Right cardiac atrium (tissue), 5 donors: ENCODE measurements at regions of chr2 and their contacts with region 1.

Region 1: GRCh38 chr2:118003396-118003824 is 10.5 kb downstream of the CCDC93 start:
- DNase-seq: no peak
- ATAC-seq: peak; percentile 90 to 93
- H3K4me3 ChIP-seq: no peak overlapping the region
- H3K27ac ChIP-seq: no peak overlapping the region
- H3K4me1 ChIP-seq: peaks cover under 1% of the 10 kb centered on the region
- H3K27me3 ChIP-seq: no peaks in the 10 kb centered on the region

Region 2: DNA sequence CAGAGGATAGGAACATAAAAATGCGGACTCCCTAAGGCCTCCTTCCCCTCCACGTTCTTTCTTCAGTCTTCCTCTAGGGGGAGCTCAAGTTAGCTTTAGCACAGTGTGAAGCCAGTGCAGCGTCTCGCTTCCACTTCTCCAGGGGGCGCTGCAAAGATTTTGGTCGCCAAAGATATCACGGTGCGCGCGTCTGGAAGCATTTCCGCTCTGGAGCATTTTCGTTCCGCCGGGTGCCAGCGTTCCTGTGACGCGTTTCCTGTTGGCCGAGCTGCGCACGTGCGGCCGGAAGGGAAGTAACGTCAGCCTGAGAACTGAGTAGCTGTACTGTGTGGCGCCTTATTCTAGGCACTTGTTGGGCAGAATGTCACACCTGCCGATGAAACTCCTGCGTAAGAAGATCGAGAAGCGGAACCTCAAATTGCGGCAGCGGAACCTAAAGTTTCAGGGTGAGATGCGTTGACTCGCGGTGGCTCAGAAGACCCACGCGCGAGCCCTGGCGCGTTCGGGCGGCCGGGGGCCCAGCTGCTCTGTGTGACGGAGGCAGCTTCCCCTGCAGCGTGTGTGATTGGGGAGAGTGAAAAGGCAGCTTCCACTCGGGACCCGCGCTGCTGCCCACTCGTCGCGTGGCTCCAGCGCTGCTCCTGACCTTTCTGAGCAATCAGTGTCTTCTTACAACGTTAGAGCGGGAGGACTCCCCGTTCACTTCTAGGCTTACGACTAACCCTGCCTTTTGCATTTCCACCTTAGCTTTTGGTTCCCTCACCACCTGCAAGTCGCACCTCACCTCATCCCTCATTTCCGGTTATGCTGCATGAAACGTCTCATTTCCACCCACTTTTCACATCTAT is 188.8 kb before region 1 on chr2 and contains the start of gene DDX18:
- intact Hi-C with region 1: loop called in 2 of 4 experiments (anchors 5 to 10 kb)
- DNase-seq: peak; percentile 97 to 99 (median 98)
- ATAC-seq: peak; percentile 99
- H3K4me3 ChIP-seq: peak within 1 kb of the TSS; percentile 91
- H3K27ac ChIP-seq: peak within 1 kb of the TSS; percentile 86
- H3K4me1 ChIP-seq: no peaks in the 10 kb centered on the region
- H3K27me3 ChIP-seq: no peaks in the 10 kb centered on the region
- total RNA-seq, gene DDX18: 27.3 to 36.0 (median 31.0) TPM

Region 3: DNA sequence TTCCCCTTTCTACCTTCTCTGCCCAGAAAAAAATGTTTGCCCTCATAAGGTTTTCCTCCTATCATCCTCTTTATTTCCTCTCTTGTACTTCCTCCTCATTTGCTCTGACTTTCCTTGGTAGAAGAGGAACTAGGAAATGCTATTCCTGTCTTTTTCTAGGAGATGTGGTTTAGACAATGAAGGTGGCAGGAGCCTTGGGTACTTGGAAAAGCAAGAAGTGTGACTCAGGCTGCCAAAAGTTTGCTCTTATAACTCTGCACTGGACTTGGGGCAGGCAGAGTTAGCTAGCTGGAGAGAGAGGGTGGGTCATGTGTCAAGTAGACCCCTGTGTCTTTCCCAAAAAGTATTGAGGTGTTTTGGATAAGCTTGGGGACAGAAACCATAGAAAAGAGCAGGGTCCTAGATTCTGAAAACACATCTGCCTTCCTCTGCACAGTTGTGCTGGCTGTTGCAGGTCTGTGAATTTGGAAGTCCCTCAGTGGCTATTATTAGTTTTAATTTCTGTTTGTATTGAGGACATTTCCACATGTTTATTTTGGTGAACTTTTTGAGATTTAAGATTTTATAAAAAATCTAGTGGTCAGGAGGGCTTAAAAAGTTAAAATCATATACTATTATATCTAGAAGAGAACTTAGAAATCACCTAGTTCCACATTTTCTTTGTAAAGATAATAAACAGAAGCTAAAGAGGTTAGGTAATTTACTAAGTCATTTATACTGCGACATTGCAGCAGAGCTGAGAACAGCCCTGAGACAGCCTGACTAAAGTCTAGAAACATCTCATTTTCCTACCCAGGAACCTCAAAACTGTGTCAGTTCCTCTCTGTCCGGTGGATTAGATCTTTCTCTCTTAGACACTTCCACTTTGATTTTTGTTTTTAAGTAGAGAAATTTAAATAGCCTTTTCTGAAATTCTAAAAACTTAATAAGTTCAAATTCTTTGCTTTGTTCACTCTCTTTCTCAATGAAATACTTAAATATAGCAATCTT is 100.8 kb after region 1 on chr2:
- intact Hi-C with region 1: no loop called
- DNase-seq: no peak
- ATAC-seq: no peak
- H3K4me3 ChIP-seq: no peak overlapping the region
- H3K27ac ChIP-seq: no peak overlapping the region
- H3K4me1 ChIP-seq: no peaks in the 10 kb centered on the region
- H3K27me3 ChIP-seq: no peaks in the 10 kb centered on the region